ENCODE measurements at regions of chr7 and their contacts with region 1.

Region 1: GRCh38 chr7:1579481-1580421 is 9.9 kb upstream of the PSMG3 start:
- DNase-seq: peak; percentile 84
- ATAC-seq: peak; percentile 98

Region 2: DNA sequence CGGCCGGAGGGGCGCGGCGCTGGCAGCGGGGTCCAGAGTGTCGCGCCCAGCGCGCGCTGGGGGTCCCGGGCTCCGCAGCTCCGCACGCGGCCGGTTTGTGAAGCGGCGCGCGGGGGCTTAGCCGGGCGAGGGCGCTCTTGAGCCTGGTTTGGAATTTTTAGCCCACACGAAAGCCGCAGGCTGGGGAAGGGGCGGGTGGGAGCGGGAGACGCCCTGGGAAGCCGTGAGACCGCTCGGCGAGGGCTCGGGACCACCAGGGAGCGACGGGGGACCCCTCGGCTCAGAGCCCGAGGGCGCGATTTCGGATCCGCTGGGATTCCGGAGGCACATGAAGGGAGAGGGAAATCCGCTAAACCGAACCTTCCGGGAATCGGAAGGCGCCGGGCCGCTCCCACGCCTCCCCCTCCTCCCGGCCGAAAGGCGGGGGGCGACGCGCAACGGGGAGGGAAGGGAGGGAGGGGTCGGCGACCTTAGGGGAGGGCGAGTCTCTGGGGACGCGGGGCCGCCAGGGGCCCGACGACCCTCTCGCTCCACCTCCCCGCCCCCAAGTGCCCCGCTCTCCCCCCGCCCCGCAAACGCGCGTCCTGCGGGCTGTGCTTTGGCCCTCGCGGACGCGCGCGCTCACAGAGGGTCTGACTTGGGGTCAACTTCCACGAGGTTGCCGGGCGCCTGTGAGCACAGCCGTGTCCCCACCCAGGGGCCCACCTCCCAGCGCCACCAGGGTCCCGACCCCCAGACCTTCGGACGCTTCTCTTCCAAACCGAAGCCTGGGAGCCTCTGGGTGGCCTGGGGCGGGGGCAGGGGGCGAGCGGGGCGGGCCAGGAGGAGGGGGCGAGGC is 85.2 kb after region 1 on chr7:
- intact Hi-C with region 1: no loop called
- DNase-seq: peak; percentile 78
- ATAC-seq: peak; percentile 51

Region 3: DNA sequence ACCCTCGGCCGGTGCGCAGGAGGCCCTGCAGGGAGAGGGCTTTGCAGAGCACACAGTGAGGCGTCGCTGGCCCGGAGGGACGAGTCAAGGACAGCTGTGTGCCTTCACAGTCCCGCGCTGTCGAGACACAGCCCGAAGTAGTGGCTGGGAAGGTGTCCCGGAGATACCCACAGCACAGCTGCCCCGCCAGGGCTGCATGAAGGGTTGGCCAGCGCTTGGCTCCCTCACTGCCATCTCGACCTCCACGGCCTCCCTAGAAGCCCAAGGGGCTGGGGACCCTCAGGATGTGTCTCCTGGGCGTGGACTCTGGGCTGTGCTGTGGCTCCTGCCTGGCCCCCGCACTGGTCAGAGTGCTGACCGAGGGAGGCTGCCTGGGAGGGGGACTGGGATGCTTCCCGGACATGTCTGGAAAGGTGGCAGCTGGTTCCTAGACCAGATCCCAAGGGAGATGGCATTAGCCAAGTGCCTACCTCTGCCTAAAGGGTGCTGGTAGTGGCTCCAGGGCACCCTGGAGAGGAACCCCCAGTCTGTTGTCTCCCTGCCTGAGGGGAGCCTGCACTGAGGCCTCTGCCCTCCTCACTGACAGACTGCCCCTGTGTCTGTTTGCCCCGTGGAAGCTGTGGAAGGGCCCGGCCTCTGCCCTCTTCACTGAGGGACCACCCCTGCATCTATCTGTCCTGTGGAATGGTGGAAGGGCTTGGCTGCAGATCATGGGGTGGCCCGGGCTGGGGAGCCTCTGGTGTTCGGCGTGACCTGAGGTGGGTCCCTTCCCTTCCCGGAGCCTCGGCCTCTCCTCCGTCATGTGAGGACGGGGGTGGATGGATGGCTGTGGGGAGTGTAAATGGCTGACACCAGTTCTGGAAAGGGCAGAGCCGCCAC is 96.2 kb after region 1 on chr7:
- intact Hi-C with region 1: no loop called
- DNase-seq: no peak
- ATAC-seq: peak; percentile 11

Region 4: GRCh38 chr7:1767524-1767923 is 187.8 kb after region 1 on chr7:
- intact Hi-C with region 1: loop called (anchors 5 kb)
- DNase-seq: no peak
- ATAC-seq: peak; percentile 41

Region 5: DNA sequence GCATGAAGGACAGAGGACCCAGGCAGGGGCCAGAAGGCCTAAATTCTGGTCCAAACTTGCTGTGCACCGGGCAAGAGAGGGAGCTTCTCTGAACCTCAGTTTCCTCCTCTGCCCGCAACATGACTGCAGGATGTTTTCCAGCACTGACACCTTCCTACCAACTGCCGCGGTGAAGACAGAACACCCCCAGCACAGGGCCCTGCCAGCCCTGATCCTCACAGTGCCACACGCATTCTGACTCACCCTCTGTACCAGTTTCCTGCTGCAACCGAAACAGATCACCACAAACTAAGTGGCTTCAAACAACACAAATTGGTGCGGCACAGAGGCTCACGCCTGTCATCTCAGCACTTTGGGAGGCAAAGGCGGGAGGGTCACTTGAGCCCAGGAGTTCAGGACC is 634.9 kb after region 1 on chr7:
- intact Hi-C with region 1: loop called (anchors 5 kb)
- DNase-seq: peak; percentile 14
- ATAC-seq: peak; percentile 29

Region 6: GRCh38 chr7:2354186-2354938 is 774.6 kb after region 1 on chr7 and contains the start of gene EIF3B:
- intact Hi-C with region 1: loop called (anchors 10 kb)
- DNase-seq: peak; percentile 93
- ATAC-seq: peak; percentile 96
- total RNA-seq, gene EIF3B: 68.0 TPM